ENCODE measurements at regions of chr19 and their contacts with region 1.

Region 1: DNA sequence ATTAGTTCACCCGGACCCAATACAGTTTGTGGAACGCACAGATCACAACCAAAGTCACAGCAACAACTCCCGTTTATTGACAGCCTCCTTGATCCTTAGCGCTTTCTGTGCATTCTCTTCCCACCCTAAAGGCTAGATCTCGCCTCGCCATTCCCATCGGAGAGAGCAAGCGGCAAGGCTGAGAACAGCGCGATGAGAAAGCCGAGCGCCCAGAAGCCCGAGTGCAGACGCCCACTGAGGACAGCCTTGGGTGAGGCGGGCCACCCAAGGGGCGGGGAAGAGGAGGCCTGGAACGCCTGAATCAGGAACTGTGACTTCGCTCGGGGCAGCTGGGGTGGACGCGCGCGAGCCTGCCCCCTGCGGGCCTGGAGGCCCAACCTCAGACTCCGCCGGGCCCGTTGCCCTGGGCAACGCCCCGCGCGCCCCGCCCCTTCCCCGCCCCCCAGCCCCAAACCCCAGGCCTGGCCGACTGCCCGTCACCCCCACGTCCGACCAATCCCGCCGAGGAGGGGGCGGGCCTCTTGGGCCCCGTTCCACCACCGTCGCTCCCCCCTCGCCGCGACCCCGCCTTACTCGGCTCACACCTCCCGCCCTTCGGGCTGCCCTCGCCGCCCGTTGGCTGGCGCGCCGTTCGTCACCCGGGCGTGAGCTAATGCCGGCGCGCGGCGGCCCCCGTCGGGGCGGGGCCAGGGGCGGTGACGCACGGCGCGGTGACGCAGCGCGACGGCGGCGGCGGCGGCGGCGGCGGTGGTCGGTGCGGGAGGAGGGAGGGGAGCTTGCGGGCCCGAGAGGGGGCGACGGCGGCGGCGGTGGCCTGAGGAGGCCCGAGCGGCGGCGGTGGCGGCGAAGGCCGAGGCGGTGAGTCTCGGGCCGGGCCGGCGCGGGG is at the start of gene SAMD4B:
- DNase-seq: peak; percentile 98
- ATAC-seq: peak; percentile 91
- H3K4me3 ChIP-seq: peak within 1 kb of the TSS; percentile 84 to 91 (median 86)
- H3K27ac ChIP-seq: peak within 1 kb of the TSS; percentile 84 to 92 (median 89)
- H3K4me1 ChIP-seq: peaks cover 38 to 55% of the 10 kb centered on the region in 2 donors
- H3K27me3 ChIP-seq: no peaks in the 10 kb centered on the region
- CTCF ChIP-seq: peak; percentile 73 to 88 (median 83)
- POLR2A ChIP-seq: peak; percentile 89 to 97
- total RNA-seq, gene SAMD4B: 30.9 to 63.7 (median 59.2) TPM

Region 2: GRCh38 chr19:38899447-38900219 is 442.3 kb before region 1 on chr19 and contains the starts of genes NFKBIB and SIRT2:
- in situ Hi-C with region 1: no loop called
- intact Hi-C with region 1: loop called (anchors 5 kb)
- DNase-seq: peak; percentile 100
- ATAC-seq: peak; percentile 97 to 98
- H3K4me3 ChIP-seq: peak within 1 kb of the TSS; percentile 74 to 98 (median 90)
- H3K27ac ChIP-seq: peak within 1 kb of the TSS; percentile 90 to 99 (median 96)
- H3K4me1 ChIP-seq: peaks cover 45 to 50% of the 10 kb centered on the region in 2 donors
- H3K27me3 ChIP-seq: no peaks in the 10 kb centered on the region
- CTCF ChIP-seq: no peak
- POLR2A ChIP-seq: peak; percentile 94 to 98
- total RNA-seq, gene NFKBIB: 32.2 to 63.8 (median 53.6) TPM
- total RNA-seq, gene SIRT2: 208 to 327 (median 285) TPM

Region 3: GRCh38 chr19:39125554-39126311 is 216.2 kb before region 1 on chr19 and contains the start of gene PAK4:
- in situ Hi-C with region 1: no loop called
- intact Hi-C with region 1: loop called (anchors 1 kb)
- DNase-seq: peak; percentile 97 to 98
- ATAC-seq: peak; percentile 98
- H3K4me3 ChIP-seq: peak within 1 kb of the TSS; percentile 73 to 96 (median 82)
- H3K27ac ChIP-seq: peak within 1 kb of the TSS; percentile 76 to 90 (median 80)
- H3K4me1 ChIP-seq: peaks cover 13 to 29% of the 10 kb centered on the region in 2 donors
- H3K27me3 ChIP-seq: peaks cover 0 to 4% (median 3%) of the 10 kb centered on the region in 3 donors
- CTCF ChIP-seq: no peak
- POLR2A ChIP-seq: peak; percentile 30 to 47
- total RNA-seq, gene PAK4: 4.7 to 11.7 (median 8.3) TPM

Region 4: GRCh38 chr19:39293394-39293793 is 48.6 kb before region 1 on chr19:
- in situ Hi-C with region 1: no loop called
- intact Hi-C with region 1: no loop called
- DNase-seq: no peak
- ATAC-seq: no peak
- H3K4me3 ChIP-seq: no peak overlapping the region
- H3K27ac ChIP-seq: no peak overlapping the region
- H3K4me1 ChIP-seq: no peaks in the 10 kb centered on the region
- H3K27me3 ChIP-seq: peaks cover 0 to 5% (median 2%) of the 10 kb centered on the region in 3 donors
- CTCF ChIP-seq: no peak
- POLR2A ChIP-seq: no peak

Region 5: DNA sequence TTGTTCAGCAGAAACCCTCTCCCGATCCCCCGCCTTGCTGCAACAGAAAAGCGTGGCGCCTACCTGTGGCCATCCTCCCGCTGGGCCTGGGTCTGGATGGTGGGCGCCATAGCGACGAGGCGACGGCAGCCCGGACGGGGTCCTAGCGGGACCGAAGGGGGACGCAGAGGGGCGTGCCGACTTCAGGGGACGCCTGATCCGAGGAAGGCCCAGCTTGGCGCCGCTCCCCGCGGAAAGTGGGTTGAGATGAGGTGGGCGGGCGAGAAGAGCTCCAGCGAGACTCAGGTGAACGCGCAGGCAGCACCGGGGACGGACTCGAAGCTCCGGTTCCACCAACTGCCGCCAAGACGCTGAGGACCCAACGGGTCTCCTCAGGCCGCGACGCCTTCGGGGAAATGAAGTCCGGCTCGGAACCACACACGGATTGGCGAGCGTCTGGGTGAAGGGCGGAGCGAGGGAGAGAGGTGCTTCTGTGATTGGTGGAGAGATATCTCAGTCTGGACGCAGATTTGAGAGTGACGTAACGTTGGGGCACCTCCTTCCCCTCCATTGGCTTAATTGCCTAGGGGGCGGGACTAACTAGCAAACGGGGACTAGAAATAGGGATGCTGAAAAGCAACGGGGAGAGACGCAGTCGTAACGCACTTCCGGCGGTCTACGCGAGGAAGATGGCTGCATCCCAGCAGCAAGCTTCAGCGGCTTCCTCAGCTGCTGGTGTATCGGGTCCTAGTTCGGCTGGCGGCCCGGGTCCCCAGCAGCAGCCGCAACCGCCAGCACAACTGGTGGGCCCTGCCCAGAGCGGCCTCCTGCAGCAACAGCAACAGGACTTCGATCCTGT is 49.0 kb after region 1 on chr19 and contains the starts of genes MED29 and PAF1:
- in situ Hi-C with region 1: loop called in 1 of 4 experiments (anchors 10 kb)
- intact Hi-C with region 1: loop called (anchors 1 kb)
- DNase-seq: peak; percentile 99
- ATAC-seq: peak; percentile 99 to 100
- H3K4me3 ChIP-seq: peak within 1 kb of the TSS; percentile 87 to 94 (median 88)
- H3K27ac ChIP-seq: peak within 1 kb of the TSS; percentile 92 to 99 (median 97)
- H3K4me1 ChIP-seq: peaks cover 17 to 20% of the 10 kb centered on the region in 2 donors
- H3K27me3 ChIP-seq: no peaks in the 10 kb centered on the region
- CTCF ChIP-seq: peak in 1 of 5 experiments; percentile 11
- POLR2A ChIP-seq: peak; percentile 87 to 95
- total RNA-seq, gene MED29: 25.5 to 48.1 (median 37.7) TPM
- total RNA-seq, gene PAF1: 48.1 to 65.3 (median 50.2) TPM

Region 6: DNA sequence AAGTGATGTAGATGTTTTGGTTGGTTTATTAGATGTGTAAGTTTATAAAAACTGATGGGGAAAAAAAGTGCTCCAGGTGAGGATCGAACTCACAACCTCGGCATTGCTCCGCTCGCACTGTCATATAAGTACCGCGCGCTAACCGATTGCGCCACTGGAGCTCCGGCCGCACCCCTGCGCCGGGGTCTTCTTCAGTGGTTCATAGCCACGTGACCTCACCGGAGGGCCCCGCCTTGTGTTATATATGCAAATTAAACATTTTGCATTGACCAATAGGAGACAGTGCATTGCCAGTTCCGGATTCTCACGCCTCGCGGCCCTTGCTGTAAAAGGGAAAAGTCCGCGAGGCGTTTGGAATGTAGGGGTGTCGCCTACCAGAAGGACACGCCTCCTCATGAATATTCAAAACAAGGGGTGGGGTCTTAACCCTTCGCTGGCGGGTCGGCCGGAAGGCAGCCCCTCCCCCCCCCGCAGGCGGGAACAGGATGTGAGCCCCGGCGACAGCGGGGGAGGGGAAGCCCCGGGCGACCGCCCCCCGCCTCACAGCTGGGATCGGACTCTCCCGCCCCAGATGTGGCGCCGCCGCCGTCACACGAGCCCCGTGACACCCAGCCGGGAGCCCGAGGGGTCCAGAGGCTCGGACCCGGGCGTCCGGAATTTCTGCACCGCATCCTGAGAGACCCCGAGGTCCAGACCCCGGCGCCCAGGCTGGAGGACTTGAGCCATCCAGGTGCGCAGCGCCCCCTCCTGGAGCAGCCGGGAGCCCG is 70.3 kb after region 1 on chr19 and contains the start of gene PLEKHG2:
- in situ Hi-C with region 1: no loop called
- intact Hi-C with region 1: loop called (anchors 1 kb)
- DNase-seq: peak; percentile 97 to 98
- ATAC-seq: peak; percentile 63 to 73
- H3K4me3 ChIP-seq: peak within 1 kb of the TSS; percentile 81 to 99 (median 94)
- H3K27ac ChIP-seq: peak within 1 kb of the TSS; percentile 98 to 100 (median 100)
- H3K4me1 ChIP-seq: peaks cover 15 to 19% of the 10 kb centered on the region in 2 donors
- H3K27me3 ChIP-seq: no peaks in the 10 kb centered on the region
- CTCF ChIP-seq: peak; percentile 90 to 98 (median 97)
- POLR2A ChIP-seq: peak; percentile 70 to 87
- total RNA-seq, gene PLEKHG2: 1.3 to 3.6 (median 3.3) TPM

Region 7: DNA sequence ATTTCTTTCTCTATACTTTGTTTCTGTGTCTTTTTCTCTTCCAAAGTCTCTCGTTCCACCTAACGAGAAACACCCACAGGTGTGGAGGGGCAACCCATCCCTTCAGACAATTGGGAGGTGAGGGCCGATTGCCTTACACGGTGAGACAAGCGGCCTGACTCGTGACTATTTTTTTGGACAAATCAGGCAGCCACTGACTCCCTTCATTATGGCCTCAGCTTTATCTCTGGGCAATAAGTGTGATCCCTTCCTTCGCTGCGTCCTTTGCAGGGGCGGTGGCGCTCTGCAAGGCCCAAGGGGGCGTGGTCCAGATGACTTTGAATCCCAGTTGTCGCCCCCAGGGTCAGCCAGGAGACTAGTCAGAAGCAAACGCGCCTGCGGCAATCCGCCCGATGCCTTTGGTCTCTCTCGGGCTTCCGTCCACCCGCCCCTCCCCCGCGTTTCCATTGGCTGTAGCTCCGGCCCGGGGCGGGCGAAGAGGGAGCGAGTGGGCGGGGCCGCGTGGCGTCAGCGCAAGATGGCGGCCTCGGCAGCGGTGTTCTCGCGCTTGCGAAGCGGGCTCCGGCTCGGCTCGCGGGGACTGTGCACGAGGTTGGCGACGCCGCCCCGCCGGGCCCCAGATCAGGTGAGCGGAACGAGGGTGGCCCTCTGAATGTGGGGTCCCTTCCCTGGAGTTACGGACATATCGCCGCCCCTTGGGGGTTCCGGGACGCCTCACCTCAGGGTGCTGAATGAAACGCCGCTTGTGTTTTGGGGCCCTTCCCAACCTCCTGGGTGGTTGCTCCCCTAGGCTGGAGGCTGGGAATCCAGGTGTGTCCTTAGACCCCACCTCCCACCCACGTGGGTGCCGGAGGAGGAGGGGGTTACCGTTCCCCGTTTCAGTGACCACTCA is 138.6 kb after region 1 on chr19 and contains the start of gene TIMM50:
- in situ Hi-C with region 1: no loop called
- intact Hi-C with region 1: loop called (anchors 5 kb)
- DNase-seq: peak; percentile 91 to 97
- ATAC-seq: peak; percentile 97 to 98
- H3K4me3 ChIP-seq: peak within 1 kb of the TSS; percentile 92 to 100 (median 99)
- H3K27ac ChIP-seq: peak within 1 kb of the TSS; percentile 88 to 95 (median 92)
- H3K4me1 ChIP-seq: peaks cover 11% of the 10 kb centered on the region in 2 donors
- H3K27me3 ChIP-seq: no peaks in the 10 kb centered on the region
- CTCF ChIP-seq: no peak
- POLR2A ChIP-seq: peak; percentile 44 to 71
- total RNA-seq, gene TIMM50: 66.9 to 97.6 (median 85.6) TPM

Region 8: GRCh38 chr19:39539519-39540332 is 197.8 kb after region 1 on chr19 and contains the start of gene EID2:
- in situ Hi-C with region 1: loop called in 3 of 4 experiments (anchors 10 to 25 kb)
- intact Hi-C with region 1: loop called (anchors 5 kb)
- DNase-seq: peak; percentile 94 to 95
- ATAC-seq: peak; percentile 99
- H3K4me3 ChIP-seq: peak within 1 kb of the TSS; percentile 69 to 95 (median 84)
- H3K27ac ChIP-seq: peak within 1 kb of the TSS; percentile 87 to 96 (median 94)
- H3K4me1 ChIP-seq: peaks cover 17 to 25% of the 10 kb centered on the region in 2 donors
- H3K27me3 ChIP-seq: no peaks in the 10 kb centered on the region
- CTCF ChIP-seq: peak; percentile 51 to 95 (median 86)
- POLR2A ChIP-seq: peak; percentile 86 to 87
- total RNA-seq, gene EID2: 7.8 to 12.7 (median 9.4) TPM